Endothelial cell of umbilical vein (primary cell): ENCODE measurements at regions of chr10 and their contacts with region 1.

Region 1: DNA sequence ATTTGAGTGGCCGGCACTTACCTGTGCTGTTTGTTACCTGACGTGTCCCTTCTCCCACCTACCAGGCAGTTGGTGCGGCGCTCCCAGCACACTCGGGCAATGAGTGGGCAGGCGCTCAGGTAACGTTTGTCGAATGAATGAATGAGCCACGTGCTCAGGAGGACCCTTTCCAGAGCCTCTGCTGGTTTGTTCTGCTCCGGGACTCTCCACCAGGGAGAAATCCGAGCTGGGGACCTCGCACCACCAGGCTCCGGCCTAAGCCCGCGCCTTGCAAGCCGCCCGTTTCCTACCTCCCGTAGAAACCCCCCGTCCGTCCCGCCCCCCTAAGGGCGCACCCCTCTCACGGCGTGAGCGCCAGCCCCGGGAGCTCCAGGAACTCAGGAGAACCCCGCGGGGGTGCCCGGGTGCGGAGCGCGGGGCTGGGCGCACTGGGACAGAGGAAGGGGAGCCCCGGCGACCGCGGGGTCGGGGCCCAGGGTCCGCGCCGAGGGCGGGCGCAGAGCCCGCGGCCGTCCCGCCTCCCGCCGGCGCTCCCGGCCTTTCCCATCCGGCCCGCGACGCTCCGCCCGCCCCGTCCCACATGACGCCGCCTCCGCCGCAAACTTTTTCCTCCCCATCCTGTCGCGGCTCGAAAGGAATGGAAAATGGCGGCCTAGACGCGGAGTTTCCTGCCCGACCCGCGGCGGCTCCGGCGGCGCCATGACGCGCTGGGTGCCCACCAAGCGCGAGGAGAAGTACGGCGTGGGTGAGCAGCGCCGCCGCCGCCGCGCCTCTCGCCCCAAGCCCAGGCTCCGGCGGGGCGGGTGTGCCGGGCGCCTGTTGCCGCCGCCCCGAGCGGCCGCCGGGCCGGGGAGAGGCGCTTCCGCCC is at the start of gene DOCK1:
- DNase-seq: peak; percentile 69
- H3K4me3 ChIP-seq: peak within 1 kb of the TSS; percentile 71 to 83 (median 78)
- H3K27ac ChIP-seq: peak within 1 kb of the TSS; percentile 74
- H3K4me1 ChIP-seq: peaks cover 8% of the 10 kb centered on the region
- H3K27me3 ChIP-seq: no peaks in the 10 kb centered on the region
- CTCF ChIP-seq: no peak
- POLR2A ChIP-seq: peak; percentile 24
- total RNA-seq, gene DOCK1: 78.7 and 83.1 TPM in 2 replicates

Region 2: DNA sequence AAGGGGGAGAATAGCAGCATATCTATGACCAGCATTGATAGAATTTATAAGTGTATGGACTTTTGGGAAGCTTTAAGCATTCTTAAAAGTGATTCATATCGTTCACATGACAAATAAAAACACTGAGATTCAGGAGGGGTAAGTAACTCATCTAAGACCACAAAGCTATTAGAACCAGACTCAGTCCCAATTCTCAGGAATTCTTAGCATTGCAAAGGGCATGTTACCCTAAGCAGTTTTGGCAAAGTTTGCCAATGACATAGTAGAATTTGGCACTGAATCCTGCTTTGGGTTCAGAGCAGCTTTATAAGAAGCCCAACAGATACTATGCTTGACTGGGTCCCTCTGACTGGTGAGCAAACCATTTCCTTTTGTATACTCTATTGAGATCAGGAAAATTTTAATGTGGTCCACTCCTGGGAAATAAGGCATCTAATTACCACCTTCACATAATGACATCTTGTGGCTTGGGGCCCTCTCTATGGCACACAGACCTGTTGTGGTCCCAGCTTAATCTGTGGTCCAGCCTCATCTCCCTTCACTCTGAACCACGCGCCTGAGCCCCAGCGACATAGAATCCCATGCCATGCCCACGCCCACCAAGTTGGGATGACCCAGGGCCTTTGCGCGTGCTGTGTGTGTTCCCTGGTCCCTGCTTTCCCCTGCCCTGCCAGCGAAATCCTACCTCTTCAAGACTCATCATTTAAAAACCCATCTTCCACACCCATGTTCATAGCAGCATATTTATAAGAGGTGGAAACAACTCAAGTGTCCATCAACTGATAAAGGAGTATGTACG is 37.3 kb before region 1 on chr10:
- CTCF ChIA-PET with region 1: no interaction called
- POLR2A ChIA-PET with region 1: no interaction called
- dilution Hi-C with region 1: no loop called
- intact Hi-C with region 1: no loop called
- DNase-seq: no peak
- H3K4me3 ChIP-seq: no peak overlapping the region
- H3K27ac ChIP-seq: no peak overlapping the region
- H3K4me1 ChIP-seq: no peaks in the 10 kb centered on the region
- H3K27me3 ChIP-seq: no peaks in the 10 kb centered on the region
- CTCF ChIP-seq: no peak
- POLR2A ChIP-seq: no peak

Region 3: DNA sequence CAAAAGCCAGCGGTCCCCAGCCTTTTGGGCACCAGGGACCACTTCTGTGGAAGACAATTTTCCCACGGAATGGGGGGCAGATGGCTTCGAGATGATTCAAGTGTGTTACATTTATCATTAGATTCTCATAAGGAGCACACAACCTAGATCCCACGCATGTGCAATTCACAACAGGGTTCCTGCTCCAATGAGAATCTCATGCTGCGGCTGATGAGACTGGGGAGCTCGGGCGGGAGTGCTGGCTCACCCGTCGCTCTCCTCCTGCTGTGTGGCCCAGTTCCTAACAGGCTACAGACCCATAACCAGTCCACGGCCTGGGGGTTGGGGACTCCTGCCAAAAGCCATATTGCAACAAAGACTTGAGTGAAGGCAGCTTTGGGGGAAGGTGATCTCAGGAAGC is 26.5 kb before region 1 on chr10:
- CTCF ChIA-PET with region 1: no interaction called
- POLR2A ChIA-PET with region 1: no interaction called
- dilution Hi-C with region 1: no loop called
- intact Hi-C with region 1: no loop called
- DNase-seq: no peak
- H3K4me3 ChIP-seq: no peak overlapping the region
- H3K27ac ChIP-seq: no peak overlapping the region
- H3K4me1 ChIP-seq: no peaks in the 10 kb centered on the region
- H3K27me3 ChIP-seq: no peaks in the 10 kb centered on the region
- CTCF ChIP-seq: no peak
- POLR2A ChIP-seq: no peak

Region 4: GRCh38 chr10:126972620-126973414 is 67.8 kb after region 1 on chr10:
- CTCF ChIA-PET with region 1: no interaction called
- POLR2A ChIA-PET with region 1: no interaction called
- dilution Hi-C with region 1: no loop called
- intact Hi-C with region 1: loop called (anchors 2 kb)
- DNase-seq: peak; percentile 88
- H3K4me3 ChIP-seq: peak overlapping the region in 1 of 3 experiments; percentile 44
- H3K27ac ChIP-seq: peak overlapping the region; percentile 80
- H3K4me1 ChIP-seq: peaks cover 21% of the 10 kb centered on the region
- H3K27me3 ChIP-seq: no peaks in the 10 kb centered on the region
- CTCF ChIP-seq: no peak
- POLR2A ChIP-seq: no peak

Region 5: DNA sequence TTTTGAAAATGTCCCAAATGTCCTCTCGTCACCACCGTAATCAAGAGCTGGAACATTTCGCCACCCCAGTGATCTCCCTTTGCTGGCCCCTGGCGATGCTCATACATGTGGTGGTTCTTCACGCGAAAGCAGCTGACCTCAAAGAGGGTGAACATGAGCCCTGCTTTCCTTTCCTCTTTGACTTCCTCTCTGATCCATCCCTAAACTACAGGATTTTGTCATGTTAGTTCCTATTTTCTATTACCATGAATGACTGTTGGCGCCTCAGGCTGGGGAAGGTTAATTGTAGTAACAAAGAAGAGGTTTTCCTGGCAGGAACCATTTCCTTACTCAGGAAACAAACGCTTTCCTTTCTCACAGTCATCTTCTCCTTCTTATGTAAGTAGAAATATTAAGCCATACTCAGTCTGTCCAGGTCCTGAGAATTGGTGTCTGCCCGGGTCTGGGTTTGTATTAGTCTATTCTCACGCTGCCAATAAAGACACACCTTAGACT is 176.8 kb after region 1 on chr10:
- CTCF ChIA-PET with region 1: no interaction called
- POLR2A ChIA-PET with region 1: no interaction called
- dilution Hi-C with region 1: no loop called
- intact Hi-C with region 1: loop called (anchors 10 kb)
- DNase-seq: peak; percentile 65
- H3K4me3 ChIP-seq: no peak overlapping the region
- H3K27ac ChIP-seq: peak overlapping the region; percentile 16
- H3K4me1 ChIP-seq: peaks cover 13% of the 10 kb centered on the region
- H3K27me3 ChIP-seq: no peaks in the 10 kb centered on the region
- CTCF ChIP-seq: no peak
- POLR2A ChIP-seq: no peak

Region 6: GRCh38 chr10:127148066-127148932 is 243.2 kb after region 1 on chr10:
- CTCF ChIA-PET with region 1: no interaction called
- POLR2A ChIA-PET with region 1: no interaction called
- dilution Hi-C with region 1: no loop called
- intact Hi-C with region 1: loop called (anchors 10 kb)
- DNase-seq: peak; percentile 89
- H3K4me3 ChIP-seq: peak overlapping the region in 1 of 3 experiments; percentile 13
- H3K27ac ChIP-seq: peak overlapping the region; percentile 95
- H3K4me1 ChIP-seq: peaks cover 28% of the 10 kb centered on the region
- H3K27me3 ChIP-seq: no peaks in the 10 kb centered on the region
- CTCF ChIP-seq: no peak
- POLR2A ChIP-seq: no peak